ENCODE measurements at regions of chr7 and their contacts with region 1.

Region 1: GRCh38 chr7:2886900-2887299 is 42.8 kb upstream of the GNA12 start:
- DNase-seq: peak in 13 of 14 experiments; percentile 23 to 82 (median 37)
- ATAC-seq: peak; percentile 70
- H3K4me3 ChIP-seq: no peak overlapping the region
- H3K4me3 Mint-ChIP-seq: peak overlapping the region; percentile 16
- H3K27ac ChIP-seq: no peak overlapping the region
- H3K27ac Mint-ChIP-seq: no peak overlapping the region
- H3K4me1 ChIP-seq: peaks cover 6% of the 10 kb centered on the region
- H3K4me1 Mint-ChIP-seq: peaks cover 5% of the 10 kb centered on the region
- H3K27me3 ChIP-seq: no peaks in the 10 kb centered on the region
- H3K27me3 Mint-ChIP-seq: no peaks in the 10 kb centered on the region
- CTCF ChIP-seq: peak; percentile 63

Region 2: GRCh38 chr7:2232766-2233520 is 654.0 kb before region 1 on chr7 and contains the start of gene MAD1L1:
- CTCF ChIA-PET with region 1: no interaction called
- POLR2A ChIA-PET with region 1: no interaction called
- intact Hi-C with region 1: no loop called
- DNase-seq: peak; percentile 81 to 94 (median 86)
- ATAC-seq: peak; percentile 91
- H3K4me3 ChIP-seq: peak within 1 kb of the TSS; percentile 78
- H3K4me3 Mint-ChIP-seq: peak within 1 kb of the TSS; percentile 94
- H3K27ac ChIP-seq: peak within 1 kb of the TSS in 1 of 2 donors; percentile 67
- H3K27ac Mint-ChIP-seq: peak within 1 kb of the TSS; percentile 70
- H3K4me1 ChIP-seq: peaks cover 34% of the 10 kb centered on the region
- H3K4me1 Mint-ChIP-seq: peaks cover 36% of the 10 kb centered on the region
- H3K27me3 ChIP-seq: no peaks in the 10 kb centered on the region
- H3K27me3 Mint-ChIP-seq: no peaks in the 10 kb centered on the region
- CTCF ChIP-seq: no peak
- total RNA-seq, gene MAD1L1: 157 to 160 TPM

Region 3: GRCh38 chr7:3200504-3200903 is 313.6 kb after region 1 on chr7:
- CTCF ChIA-PET with region 1: no interaction called
- POLR2A ChIA-PET with region 1: no interaction called
- intact Hi-C with region 1: loop called in 1 of 2 experiments (anchors 2 kb)
- DNase-seq: peak in 6 of 14 experiments; percentile 2 to 34 (median 23)
- ATAC-seq: no peak
- H3K4me3 ChIP-seq: no peak overlapping the region
- H3K4me3 Mint-ChIP-seq: no peak overlapping the region
- H3K27ac ChIP-seq: no peak overlapping the region
- H3K27ac Mint-ChIP-seq: no peak overlapping the region
- H3K4me1 ChIP-seq: no peaks in the 10 kb centered on the region
- H3K4me1 Mint-ChIP-seq: no peaks in the 10 kb centered on the region
- H3K27me3 ChIP-seq: no peaks in the 10 kb centered on the region
- H3K27me3 Mint-ChIP-seq: no peaks in the 10 kb centered on the region
- CTCF ChIP-seq: peak; percentile 45

Region 4: DNA sequence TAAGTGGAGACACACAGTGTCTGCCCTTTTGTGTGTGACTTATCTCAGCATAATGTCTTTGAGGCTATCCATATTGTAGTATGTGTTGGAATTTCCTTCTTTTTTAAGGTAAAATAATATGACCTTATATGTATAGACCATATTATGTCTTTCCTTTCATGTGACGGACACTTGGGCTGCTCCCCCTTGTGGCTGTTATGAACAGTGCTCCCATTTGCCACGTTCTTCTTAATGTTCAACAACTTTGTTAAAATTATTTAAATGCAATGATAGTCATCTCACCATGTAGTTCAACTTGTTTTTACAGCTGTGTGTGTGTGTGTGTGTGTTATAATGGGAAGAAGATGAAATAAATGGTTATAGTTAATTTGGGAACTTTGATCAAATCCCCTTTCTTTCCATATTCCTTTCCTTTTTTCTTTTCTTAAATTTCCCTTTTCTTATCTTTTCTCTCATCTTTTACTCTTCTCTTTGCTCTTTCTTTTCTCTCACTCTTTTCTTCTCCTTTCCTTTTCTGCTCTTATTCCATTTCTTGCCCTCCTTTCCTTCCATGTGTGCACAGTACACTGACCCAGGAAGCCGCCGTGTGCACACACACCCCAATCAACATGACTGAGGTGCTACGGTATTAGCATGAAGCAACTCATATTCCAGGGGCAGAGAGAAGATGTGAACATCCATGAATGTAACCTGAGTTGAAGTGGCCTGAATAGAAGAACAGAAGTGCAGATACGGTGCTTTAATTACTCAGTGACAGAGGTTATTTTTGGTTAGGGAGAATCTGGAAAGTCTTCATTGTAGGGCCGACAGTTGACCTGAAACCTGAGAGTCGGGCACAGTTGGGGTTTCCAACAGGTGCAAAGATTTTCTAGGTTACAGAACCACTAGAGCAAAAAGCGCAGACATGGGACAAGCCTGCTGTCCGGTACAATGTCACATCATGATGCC is 1010.8 kb after region 1 on chr7:
- CTCF ChIA-PET with region 1: no interaction called
- POLR2A ChIA-PET with region 1: no interaction called
- intact Hi-C with region 1: loop called in 1 of 2 experiments (anchors 5 kb)
- DNase-seq: peak; percentile 13 to 75 (median 32)
- ATAC-seq: peak; percentile 52
- H3K4me3 ChIP-seq: no peak overlapping the region
- H3K4me3 Mint-ChIP-seq: no peak overlapping the region
- H3K27ac ChIP-seq: no peak overlapping the region
- H3K27ac Mint-ChIP-seq: no peak overlapping the region
- H3K4me1 ChIP-seq: no peaks in the 10 kb centered on the region
- H3K4me1 Mint-ChIP-seq: no peaks in the 10 kb centered on the region
- H3K27me3 ChIP-seq: no peaks in the 10 kb centered on the region
- H3K27me3 Mint-ChIP-seq: no peaks in the 10 kb centered on the region
- CTCF ChIP-seq: peak; percentile 79